ENCODE measurements at regions of chr12 and their contacts with region 1.

Region 1: DNA sequence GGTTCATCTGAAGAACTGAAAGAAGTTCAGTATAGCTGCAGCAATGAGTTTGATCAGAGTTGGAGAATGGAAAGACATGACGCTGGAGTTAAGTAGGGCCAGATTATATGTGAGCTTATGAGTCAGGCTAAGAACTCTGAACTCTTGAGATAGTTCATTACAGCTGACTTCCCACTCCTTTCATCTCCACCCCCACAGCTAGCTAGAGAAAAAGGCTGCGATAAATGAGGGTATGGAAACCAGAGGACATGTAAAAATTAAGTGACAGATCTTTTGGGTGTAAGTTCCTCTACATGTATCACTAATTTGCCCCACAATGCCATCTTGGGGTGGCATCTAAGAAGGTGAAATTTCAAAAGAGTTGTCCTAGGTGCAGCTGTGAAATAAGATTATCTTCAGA is 28.6 kb downstream of the PYM1 start:
- DNase-seq: no peak
- H3K4me3 Mint-ChIP-seq: no peak overlapping the region
- H3K27ac Mint-ChIP-seq: peak overlapping the region; percentile 29
- H3K4me1 Mint-ChIP-seq: peaks cover 3% of the 10 kb centered on the region
- H3K27me3 Mint-ChIP-seq: no peaks in the 10 kb centered on the region

Region 2: GRCh38 chr12:55829967-55830600 is 69.0 kb before region 1 on chr12:
- intact Hi-C with region 1: loop called (anchors 2 kb)
- DNase-seq: peak; percentile 16
- H3K4me3 Mint-ChIP-seq: peak overlapping the region; percentile 97
- H3K27ac Mint-ChIP-seq: peak overlapping the region; percentile 89
- H3K4me1 Mint-ChIP-seq: peaks cover 36% of the 10 kb centered on the region
- H3K27me3 Mint-ChIP-seq: no peaks in the 10 kb centered on the region

Measured in activated T-helper 2 cell treated with anti-CD3 and anti-CD28 coated beads, Interferon-gamma antibody, Interleukin-2, Interleukin-4, amounts not matched to agents 10 μg/mL and 5 μg/mL and 100 μg/mL, durations not matched to agents 14 hours and 24 hours and 36 hours (primary cell).